ENCODE measurements at regions of chr19 and their contacts with region 1.

Region 1: DNA sequence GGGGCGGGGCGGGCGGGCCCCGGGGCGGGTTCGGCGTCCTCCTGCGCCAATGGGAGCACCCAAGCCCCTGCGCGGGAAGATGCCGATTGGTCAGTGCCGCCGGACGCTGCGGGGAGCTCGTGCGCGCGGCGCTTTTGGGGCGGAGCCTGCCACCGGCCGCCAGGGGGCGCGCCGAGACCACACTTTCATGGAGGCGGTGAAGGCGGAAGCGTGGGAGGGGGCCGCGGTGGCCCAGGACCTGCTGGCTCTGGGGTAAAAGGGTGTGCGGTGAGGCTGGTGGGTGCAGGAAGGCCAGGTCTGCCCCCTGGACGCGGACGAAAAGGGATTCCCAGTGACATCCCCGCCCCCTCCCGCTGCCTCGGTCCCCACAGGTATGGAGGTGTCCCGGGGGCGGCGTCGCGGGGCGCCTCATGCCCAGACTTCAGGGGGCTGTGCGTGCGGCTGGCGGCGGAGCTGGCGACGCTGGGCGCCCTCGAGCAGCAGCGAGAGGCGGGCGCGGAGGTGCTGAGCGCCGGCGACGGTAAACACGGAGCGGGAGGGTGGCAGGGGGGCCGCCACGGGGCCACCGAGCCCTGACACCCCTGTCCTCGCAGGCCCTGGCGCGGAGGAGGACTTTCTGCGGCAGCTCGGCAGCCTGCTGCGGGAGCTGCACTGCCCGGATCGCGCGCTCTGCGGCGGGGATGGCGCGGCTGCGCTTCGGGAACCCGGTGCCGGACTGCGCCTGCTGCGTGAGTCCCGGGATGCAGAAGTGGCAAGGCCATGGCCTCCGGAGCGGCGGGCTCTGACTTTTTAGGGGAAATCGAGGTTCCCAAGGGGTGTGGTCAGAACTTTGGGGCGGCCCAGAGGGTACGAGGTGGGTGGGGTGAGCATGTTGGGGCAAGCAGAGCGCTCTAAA is at the start of gene FAM98C:
- DNase-seq: peak; percentile 99
- ATAC-seq: peak; percentile 99
- H3K4me3 Mint-ChIP-seq: peak within 1 kb of the TSS; percentile 84
- H3K27ac Mint-ChIP-seq: peak within 1 kb of the TSS; percentile 85
- H3K4me1 Mint-ChIP-seq: peaks cover 16% of the 10 kb centered on the region
- H3K27me3 Mint-ChIP-seq: no peaks in the 10 kb centered on the region
- total RNA-seq, gene FAM98C: 19.6 to 24.8 TPM

Region 2: GRCh38 chr19:38374429-38375176 is 28.6 kb before region 1 on chr19 and contains the start of gene PSMD8:
- CTCF ChIA-PET with region 1: interaction called, 21 read pairs
- POLR2A ChIA-PET with region 1: interaction called, 8 read pairs
- intact Hi-C with region 1: loop called (anchors 1 to 2 kb)
- DNase-seq: peak; percentile 99
- ATAC-seq: peak; percentile 99
- H3K4me3 Mint-ChIP-seq: peak within 1 kb of the TSS; percentile 97
- H3K27ac Mint-ChIP-seq: peak within 1 kb of the TSS; percentile 98
- H3K4me1 Mint-ChIP-seq: peaks cover 26% of the 10 kb centered on the region
- H3K27me3 Mint-ChIP-seq: peaks cover 5% of the 10 kb centered on the region
- total RNA-seq, gene PSMD8: 219 to 275 TPM

Region 3: DNA sequence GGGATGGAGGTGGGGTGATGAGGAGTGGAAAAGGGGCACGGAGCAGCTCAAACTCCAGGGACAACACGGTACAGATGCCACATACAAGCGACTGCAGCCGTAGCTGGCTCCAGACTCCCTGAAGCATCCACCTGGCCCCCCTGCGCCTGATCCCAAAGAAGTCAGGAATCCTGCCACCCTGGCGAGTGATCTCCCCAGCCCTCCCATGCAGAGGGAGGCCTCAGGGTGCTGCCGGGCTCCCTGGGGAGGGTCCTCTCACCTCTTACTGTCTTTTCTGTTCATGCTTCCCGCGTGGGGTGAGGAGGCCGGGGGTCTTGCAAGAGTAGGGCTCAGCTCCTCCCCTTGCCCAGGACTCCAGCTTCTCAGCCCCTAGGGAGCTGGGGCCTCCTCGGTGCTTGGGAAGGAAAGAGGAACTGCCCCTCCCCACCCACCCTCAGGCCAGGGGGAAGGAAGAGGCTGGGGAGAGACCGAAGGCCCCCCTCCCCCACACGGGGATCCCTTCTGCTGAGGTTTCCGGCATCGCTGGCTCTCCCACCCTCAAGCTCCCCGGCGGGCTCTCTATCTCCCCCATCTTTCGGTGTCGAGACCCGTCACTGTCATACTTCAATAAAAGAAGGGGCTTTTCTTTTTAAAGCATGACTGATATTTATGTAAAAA is 22.7 kb after region 1 on chr19 and contains the start of gene RASGRP4:
- CTCF ChIA-PET with region 1: interaction called, 23 read pairs
- POLR2A ChIA-PET with region 1: interaction called, 5 read pairs
- intact Hi-C with region 1: loop called in 1 of 2 experiments (anchors 1 kb)
- DNase-seq: peak; percentile 78
- ATAC-seq: peak; percentile 27
- H3K4me3 Mint-ChIP-seq: peak within 1 kb of the TSS; percentile 60
- H3K27ac Mint-ChIP-seq: peak within 1 kb of the TSS; percentile 90
- H3K4me1 Mint-ChIP-seq: peaks cover 33% of the 10 kb centered on the region
- H3K27me3 Mint-ChIP-seq: no peaks in the 10 kb centered on the region
- total RNA-seq, gene RASGRP4: 5.6 to 5.9 TPM

Region 4: GRCh38 chr19:38506723-38507550 is 103.7 kb after region 1 on chr19:
- CTCF ChIA-PET with region 1: interaction called, 8 read pairs
- POLR2A ChIA-PET with region 1: no interaction called
- intact Hi-C with region 1: loop called (anchors 1 to 2 kb)
- DNase-seq: peak; percentile 98
- ATAC-seq: peak; percentile 94
- H3K4me3 Mint-ChIP-seq: no peak overlapping the region
- H3K27ac Mint-ChIP-seq: no peak overlapping the region
- H3K4me1 Mint-ChIP-seq: peaks cover 6% of the 10 kb centered on the region
- H3K27me3 Mint-ChIP-seq: peaks cover 2% of the 10 kb centered on the region

Region 5: DNA sequence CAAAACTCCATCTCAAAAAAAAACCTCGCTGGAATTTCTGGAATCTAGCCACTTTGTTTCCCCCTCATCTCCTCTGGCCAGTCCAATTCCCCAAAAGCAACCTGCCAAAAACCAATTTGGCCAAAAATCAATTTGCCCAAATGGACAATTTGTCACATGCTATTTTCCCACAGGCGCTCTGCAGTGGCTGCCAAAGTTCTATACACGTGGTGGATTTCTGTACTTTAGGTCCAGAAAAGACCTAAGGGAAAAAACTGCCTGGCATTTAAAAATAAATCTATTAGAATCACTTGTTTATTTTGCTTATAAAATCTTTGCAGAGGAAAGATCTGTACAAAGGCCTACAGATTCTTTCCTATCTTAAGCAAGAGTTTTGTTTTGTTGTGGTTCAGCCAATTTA is 135.2 kb after region 1 on chr19:
- CTCF ChIA-PET with region 1: no interaction called
- POLR2A ChIA-PET with region 1: no interaction called
- intact Hi-C with region 1: no loop called
- DNase-seq: no peak
- ATAC-seq: no peak
- H3K4me3 Mint-ChIP-seq: peak overlapping the region; percentile 36
- H3K27ac Mint-ChIP-seq: peak overlapping the region; percentile 89
- H3K4me1 Mint-ChIP-seq: peaks cover 38% of the 10 kb centered on the region
- H3K27me3 Mint-ChIP-seq: no peaks in the 10 kb centered on the region

Region 6: DNA sequence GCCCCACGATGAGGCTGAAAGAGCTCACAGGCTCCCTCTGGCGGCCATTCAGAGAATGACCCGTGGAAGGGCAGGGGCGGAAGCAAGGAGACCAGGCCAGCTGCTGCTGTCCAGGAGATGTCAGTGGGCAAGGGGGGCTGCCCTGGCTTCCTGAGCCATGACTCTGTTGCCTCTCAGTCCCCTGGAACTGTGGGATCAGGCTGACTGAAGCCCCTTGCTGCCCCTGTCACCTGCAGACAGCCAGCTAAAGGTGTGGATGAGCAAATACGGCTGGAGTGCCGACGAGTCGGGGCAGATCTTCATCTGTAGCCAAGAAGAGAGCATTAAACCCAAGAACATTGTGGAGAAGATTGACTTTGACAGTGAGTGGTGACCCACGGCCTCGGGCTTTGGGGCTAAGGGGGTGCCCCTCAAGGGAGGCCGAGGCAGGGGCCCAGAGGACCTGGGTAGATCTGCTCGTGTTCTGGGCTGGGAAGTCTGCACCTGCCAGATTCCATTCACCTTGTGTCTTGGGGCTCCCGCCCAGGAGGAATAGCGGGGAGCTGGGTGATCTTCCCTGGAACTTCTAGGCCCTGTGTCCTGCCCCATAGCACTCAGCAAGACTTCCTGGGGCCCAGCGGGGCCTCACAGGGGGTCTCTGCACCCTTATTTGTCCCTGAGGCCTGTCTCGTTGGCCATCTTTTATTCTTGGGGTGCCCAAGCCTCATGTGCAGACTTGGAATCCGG is 231.7 kb after region 1 on chr19:
- CTCF ChIA-PET with region 1: interaction called, 22 read pairs
- POLR2A ChIA-PET with region 1: interaction called, 3 read pairs
- intact Hi-C with region 1: loop called (anchors 1 kb)
- DNase-seq: peak; percentile 84
- ATAC-seq: no peak
- H3K4me3 Mint-ChIP-seq: no peak overlapping the region
- H3K27ac Mint-ChIP-seq: peak overlapping the region; percentile 90
- H3K4me1 Mint-ChIP-seq: peaks cover 28% of the 10 kb centered on the region
- H3K27me3 Mint-ChIP-seq: no peaks in the 10 kb centered on the region

Region 7: GRCh38 chr19:38891771-38892170 is 488.6 kb after region 1 on chr19:
- CTCF ChIA-PET with region 1: interaction called, 4 read pairs
- POLR2A ChIA-PET with region 1: no interaction called
- intact Hi-C with region 1: loop called in 1 of 2 experiments (anchors 5 kb)
- DNase-seq: no peak
- ATAC-seq: no peak
- H3K4me3 Mint-ChIP-seq: no peak overlapping the region
- H3K27ac Mint-ChIP-seq: no peak overlapping the region
- H3K4me1 Mint-ChIP-seq: no peaks in the 10 kb centered on the region
- H3K27me3 Mint-ChIP-seq: no peaks in the 10 kb centered on the region

Measured in activated CD4-positive, alpha-beta T cell treated with anti-CD3 and anti-CD28 coated beads for 36 hours (primary cell).